Natural killer cell (primary cell): ENCODE measurements at regions of chr19 and their contacts with region 1.

Region 1: DNA sequence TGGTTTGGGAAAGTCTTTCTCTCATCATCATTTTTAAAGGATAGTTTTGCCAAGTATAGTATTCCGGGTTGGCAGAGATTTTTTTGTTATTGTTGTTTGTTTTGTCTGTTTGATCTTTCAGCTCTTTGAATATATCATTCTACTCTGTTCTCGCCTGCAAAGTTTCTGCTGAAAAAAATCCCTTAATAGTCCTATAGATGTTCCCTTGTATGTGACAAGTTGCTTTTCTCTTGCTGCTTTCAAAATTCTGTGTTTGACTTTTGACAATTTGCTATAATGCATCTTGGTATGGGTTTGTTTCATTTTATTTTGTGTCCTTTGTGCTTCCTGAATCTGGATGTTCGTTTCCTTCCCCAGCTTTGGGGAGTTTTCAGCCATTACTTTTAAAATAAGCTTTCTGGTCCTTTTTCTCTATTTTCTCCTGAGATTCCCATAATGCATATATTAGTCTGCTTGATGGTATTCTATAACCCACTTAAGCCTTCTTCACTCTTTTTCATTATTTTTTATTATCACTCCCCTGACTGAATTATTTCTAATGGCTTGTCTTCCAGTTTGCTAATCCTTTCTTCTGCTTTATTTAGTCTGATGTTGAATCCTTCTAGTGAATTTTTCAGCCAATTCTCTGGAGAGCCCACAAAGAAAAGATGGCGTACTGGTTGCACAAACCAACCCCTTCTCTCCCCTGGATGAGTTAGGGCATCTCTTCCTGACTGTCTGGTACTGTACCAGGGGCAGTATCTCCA is 14.6 kb downstream of the ZNF569 start:
- DNase-seq: no peak
- ATAC-seq: no peak
- H3K4me3 ChIP-seq: no peak overlapping the region
- H3K4me3 Mint-ChIP-seq: no peak overlapping the region
- H3K27ac ChIP-seq: no peak overlapping the region
- H3K27ac Mint-ChIP-seq: no peak overlapping the region
- H3K4me1 ChIP-seq: no peaks in the 10 kb centered on the region
- H3K4me1 Mint-ChIP-seq: no peaks in the 10 kb centered on the region
- H3K27me3 ChIP-seq: no peaks in the 10 kb centered on the region
- H3K27me3 Mint-ChIP-seq: no peaks in the 10 kb centered on the region
- CTCF ChIP-seq: no peak

Region 2: GRCh38 chr19:37564624-37565369 is 112.1 kb after region 1 on chr19:
- intact Hi-C with region 1: loop called (anchors 10 kb)
- DNase-seq: peak in 1 of 2 donors; percentile 2
- ATAC-seq: no peak
- H3K4me3 ChIP-seq: no peak overlapping the region
- H3K4me3 Mint-ChIP-seq: no peak overlapping the region
- H3K27ac ChIP-seq: no peak overlapping the region
- H3K27ac Mint-ChIP-seq: no peak overlapping the region
- H3K4me1 ChIP-seq: no peaks in the 10 kb centered on the region
- H3K4me1 Mint-ChIP-seq: no peaks in the 10 kb centered on the region
- H3K27me3 ChIP-seq: no peaks in the 10 kb centered on the region
- H3K27me3 Mint-ChIP-seq: no peaks in the 10 kb centered on the region
- CTCF ChIP-seq: no peak

Region 3: DNA sequence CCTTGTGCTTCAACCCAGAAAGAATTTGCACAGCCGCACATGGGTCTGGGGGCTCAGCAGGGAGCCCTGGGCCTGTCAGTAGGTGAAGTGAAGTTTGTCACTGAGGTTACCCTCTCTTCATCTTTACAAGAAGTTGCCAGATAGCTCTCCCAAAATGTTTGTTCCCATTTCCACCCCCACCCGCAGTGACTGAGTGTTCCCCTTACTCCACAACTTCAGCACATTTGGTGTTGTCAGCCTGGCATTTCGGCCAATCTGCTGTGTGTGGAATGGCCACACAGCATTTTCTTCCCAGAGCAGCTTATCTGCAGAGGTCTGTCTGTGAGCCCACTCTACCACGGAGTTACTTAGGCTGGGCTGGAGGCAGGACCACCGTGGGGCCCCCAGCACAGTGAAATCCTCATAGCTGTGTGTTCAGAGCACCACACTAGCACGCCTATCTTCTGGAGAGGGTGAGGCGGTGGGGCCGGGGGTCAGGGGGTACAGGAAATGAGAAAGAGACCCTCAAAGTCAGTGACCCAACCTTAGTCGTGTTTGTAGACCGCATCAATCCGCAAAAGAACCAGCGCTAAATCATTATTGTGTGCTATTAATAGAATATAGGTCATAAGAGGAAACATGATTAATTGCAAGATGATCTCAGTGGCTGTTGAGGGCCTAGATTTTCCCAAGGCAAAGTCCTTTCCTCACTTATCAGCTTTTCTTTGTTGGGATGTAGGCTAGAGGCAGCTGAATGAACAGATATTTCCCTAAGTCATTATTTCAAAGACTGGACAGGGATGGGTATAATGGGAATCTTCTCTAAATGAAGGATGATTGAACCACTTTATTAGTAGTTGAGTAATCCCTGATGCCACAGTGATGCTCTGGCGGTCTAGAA is 570.4 kb after region 1 on chr19:
- intact Hi-C with region 1: no loop called
- DNase-seq: no peak
- ATAC-seq: no peak
- H3K4me3 ChIP-seq: no peak overlapping the region
- H3K4me3 Mint-ChIP-seq: no peak overlapping the region
- H3K27ac ChIP-seq: no peak overlapping the region
- H3K27ac Mint-ChIP-seq: peak overlapping the region in 1 of 2 donors; percentile 30
- H3K4me1 ChIP-seq: peaks cover 10% of the 10 kb centered on the region
- H3K4me1 Mint-ChIP-seq: peaks cover 24 to 31% of the 10 kb centered on the region in 2 donors
- H3K27me3 ChIP-seq: no peaks in the 10 kb centered on the region
- H3K27me3 Mint-ChIP-seq: no peaks in the 10 kb centered on the region
- CTCF ChIP-seq: no peak